ENCODE measurements at regions of chr3 and their contacts with region 1.

Region 1: GRCh38 chr3:137032465-137033120 is 74.8 kb downstream of the IL20RB start:
- DNase-seq: peak; percentile 85 to 91
- ATAC-seq: peak; percentile 90 to 96 (median 93)
- H3K4me3 ChIP-seq: peak overlapping the region; percentile 57
- H3K27ac ChIP-seq: no peak overlapping the region
- H3K4me1 ChIP-seq: peaks cover 3% of the 10 kb centered on the region
- H3K27me3 ChIP-seq: peaks cover 0 to 1% (median 0%) of the 10 kb centered on the region in 3 donors
- CTCF ChIP-seq: peak; percentile 98

Region 2: DNA sequence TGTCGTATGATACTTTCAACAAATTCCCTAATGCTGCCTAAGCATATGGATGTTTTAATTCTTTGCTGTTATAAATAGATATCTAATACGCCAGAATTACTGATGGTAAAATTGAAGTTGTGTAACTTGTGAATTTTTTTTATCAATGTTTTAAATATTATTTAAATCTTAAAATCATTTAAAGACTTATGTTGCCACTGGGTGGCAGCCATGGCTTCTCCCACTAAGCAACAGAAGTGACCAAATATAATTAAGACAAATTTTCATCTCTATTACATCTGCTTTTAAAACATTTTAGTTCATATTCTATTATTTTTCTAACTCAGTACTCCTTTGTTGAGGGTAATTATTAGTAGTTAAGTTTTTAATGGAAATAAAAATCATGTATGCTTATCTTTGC is 82.9 kb before region 1 on chr3:
- intact Hi-C with region 1: no loop called
- DNase-seq: no peak
- ATAC-seq: no peak
- H3K4me3 ChIP-seq: no peak overlapping the region
- H3K27ac ChIP-seq: no peak overlapping the region
- H3K4me1 ChIP-seq: peaks cover 5% of the 10 kb centered on the region
- H3K27me3 ChIP-seq: no peaks in the 10 kb centered on the region
- CTCF ChIP-seq: no peak

Region 3: DNA sequence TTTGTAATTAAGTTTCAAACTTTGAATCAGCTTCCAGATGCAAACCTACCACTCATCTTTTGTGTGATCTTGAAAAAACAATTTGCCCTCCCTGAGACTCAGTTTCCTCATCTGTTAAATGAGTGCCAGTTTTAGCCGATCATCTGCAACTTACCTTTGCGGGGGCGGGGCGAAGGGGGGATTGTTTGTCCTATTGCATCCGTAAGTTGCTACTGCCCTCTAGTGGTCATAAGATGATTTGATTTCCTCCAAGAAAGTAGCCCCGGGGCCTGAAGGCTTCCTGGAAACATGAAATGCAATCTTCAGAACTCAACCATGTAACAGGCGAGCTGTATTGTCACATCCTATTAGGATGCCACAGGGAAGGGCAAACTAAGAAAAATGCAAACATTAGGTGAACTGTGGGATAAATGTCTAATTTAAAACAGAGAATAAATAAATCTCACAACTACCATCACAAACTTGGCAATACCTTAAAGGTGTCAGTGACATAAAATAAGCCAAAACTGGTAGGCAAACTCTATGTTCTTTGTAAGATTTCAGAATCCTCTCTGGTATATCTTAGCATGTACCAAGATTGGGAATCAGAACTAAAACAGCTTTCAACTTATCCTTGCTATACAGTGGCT is 913.9 kb after region 1 on chr3:
- intact Hi-C with region 1: loop called in 1 of 2 experiments (anchors 5 kb)
- DNase-seq: peak in 1 of 2 donors; percentile 19
- ATAC-seq: no peak
- H3K4me3 ChIP-seq: no peak overlapping the region
- H3K27ac ChIP-seq: no peak overlapping the region
- H3K4me1 ChIP-seq: no peaks in the 10 kb centered on the region
- H3K27me3 ChIP-seq: no peaks in the 10 kb centered on the region
- CTCF ChIP-seq: peak; percentile 52